GM18951 (cell line): ENCODE measurements at regions of chr22 and their contacts with region 1.

Region 1: DNA sequence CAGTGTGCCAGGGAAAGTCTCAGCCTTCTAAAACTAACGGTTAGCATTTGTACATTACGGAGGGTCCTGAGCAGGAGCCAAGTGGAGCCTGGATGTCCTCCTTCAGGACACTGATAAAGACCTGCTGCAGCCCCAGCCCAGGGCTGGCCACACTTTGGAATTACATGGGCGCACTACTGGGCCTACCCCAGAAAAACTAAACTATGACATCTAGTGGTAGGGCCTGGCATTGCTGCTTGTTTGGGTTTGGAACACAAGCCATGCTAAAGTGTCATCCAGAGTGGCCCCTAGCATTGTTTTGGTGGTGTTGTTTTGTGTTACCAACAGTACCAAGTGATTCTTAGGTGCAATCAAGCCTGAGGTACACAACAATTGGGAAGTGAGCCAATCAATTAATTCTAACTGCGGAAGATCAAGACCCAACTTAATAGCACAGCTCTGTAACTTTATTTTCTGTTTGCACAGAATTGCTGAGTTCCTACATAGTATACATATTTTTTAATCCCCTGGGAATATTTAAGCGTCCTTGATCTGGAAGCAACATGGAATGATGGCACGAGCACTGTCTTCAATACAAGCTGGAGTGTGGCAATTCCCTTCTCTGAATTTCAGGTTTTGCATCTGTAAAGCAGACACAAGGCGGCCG is 340.7 kb downstream of the LARGE1 start:
- POLR2A ChIP-seq: no peak

Region 2: DNA sequence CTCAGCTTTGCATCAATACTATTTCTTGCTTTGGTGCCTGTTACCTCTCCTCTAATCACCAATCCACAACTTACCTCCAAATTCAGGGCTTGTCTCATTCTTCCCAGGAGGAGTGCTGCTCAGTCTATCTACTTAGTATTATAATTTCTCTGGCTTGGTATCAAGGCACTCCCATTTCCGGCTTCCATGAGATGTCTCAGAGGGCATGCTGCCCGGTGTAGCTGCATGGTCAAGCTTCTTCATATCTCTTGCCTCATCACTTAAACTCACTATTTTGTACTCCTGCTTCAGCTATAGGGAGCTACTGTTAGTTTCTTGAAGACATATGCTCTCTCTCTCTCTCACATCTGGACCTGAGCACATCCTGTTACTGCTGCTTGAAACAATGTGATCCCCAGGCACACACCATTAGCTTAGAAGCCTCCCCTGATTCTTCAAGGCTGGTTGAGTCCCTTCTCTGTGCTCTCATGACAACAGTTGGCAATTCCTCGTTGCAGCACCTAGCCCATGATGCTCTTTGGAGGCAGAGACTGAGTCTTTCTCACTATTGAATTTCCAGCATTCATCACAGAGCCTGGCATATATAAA is 338.6 kb before region 1 on chr22:
- in situ Hi-C with region 1: no loop called
- POLR2A ChIP-seq: no peak

Region 3: DNA sequence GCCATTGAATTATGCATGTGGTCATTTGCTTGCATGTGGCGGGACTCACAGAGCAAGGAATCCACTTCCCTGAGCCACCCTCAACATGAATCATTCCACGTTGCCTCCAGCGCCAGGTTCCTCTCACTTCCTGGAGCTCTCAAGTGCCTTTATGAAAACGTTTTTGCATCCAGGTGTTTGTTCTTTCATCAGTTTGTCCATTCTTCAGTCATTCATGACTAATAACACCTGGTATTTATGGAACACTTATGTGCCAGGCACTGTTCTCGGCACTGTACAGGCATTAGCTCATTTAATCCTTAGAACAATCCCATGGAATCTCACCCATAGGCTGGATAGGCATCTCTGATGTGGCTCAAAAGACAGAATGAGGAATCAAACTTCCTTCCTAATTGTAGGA is 265.3 kb before region 1 on chr22:
- in situ Hi-C with region 1: loop called (anchors 10 kb)
- POLR2A ChIP-seq: no peak

Region 4: GRCh38 chr22:33529424-33530113 is 50.0 kb before region 1 on chr22:
- in situ Hi-C with region 1: loop called (anchors 10 kb)
- POLR2A ChIP-seq: no peak